Colonic mucosa (tissue), 4 donors: ENCODE measurements at regions of chr20 and their contacts with region 1.

Region 1: DNA sequence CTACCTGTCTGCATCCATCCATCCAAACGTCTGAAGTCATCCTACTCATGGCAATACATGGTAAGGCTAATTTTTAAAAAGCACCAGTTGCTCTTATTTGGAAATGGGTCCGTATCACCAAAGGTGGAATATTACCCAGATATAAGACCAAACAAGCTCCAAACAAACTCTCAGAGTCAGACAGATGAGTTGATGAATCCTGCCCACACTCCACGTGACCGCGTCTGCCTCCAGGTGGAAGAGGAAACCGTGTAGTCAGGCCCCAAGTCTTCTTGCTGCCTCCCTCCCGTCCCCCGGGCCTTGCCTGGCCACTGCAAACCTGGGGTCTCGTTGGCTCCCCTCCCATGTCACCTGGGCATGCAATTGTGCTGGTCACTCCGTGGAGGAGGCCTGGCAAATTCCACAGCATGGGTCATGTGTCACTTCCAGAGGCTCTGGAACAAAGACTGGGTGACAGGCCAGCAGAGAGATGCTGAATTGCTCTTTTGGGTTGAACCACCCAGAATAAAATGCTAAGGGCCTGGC is 31.8 kb downstream of the CTCFL start:
- DNase-seq: no peak
- H3K4me3 ChIP-seq: no peak overlapping the region
- H3K27ac ChIP-seq: no peak overlapping the region
- H3K4me1 ChIP-seq: no peaks in the 10 kb centered on the region
- H3K27me3 ChIP-seq: no peaks in the 10 kb centered on the region
- CTCF ChIP-seq: no peak

Region 2: DNA sequence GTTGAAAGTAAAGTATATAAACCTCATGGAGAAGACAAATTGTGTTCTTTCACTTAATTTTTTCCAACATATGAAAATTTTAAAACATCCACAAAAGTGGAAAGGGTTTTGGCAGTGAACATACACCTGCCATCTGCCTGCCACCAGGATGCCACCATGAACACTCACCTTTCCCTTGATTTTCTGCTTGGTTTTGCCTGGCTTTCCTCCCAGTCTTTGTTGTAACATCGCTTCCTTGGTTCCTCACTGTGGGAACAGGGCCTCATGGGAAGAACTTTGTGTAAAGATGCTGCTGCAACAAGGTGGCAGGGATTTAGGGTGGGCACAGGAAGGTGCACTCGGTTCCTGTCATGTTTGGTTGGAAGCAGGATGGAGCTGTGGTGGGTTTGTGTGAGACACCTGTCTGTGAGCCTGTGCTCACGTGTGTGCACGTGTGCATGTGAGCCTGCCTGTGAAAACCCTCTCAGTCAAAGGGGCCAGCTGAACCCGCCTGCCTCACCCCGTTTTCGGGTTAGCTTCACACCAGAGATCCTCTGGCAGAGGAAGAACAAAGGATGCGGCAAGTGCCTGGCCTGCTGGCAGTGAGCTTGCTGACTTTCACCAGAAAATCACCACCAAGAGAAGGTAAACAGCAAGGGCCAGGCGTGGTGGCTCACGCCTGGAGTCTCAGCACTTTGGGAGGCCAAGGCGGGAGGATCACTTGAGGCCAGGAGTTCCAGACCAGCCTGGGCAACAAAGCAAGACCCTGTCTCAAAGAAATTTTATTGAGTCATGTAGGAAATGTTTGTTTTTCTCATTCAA is 112.9 kb before region 1 on chr20:
- intact Hi-C with region 1: loop called (anchors 2 kb)
- DNase-seq: no peak
- H3K4me3 ChIP-seq: no peak overlapping the region
- H3K27ac ChIP-seq: no peak overlapping the region
- H3K4me1 ChIP-seq: peaks cover 10% of the 10 kb centered on the region
- H3K27me3 ChIP-seq: no peaks in the 10 kb centered on the region
- CTCF ChIP-seq: no peak